AG04449 (cell line): ENCODE measurements at regions of chr1 and their contacts with region 1.

Region 1: DNA sequence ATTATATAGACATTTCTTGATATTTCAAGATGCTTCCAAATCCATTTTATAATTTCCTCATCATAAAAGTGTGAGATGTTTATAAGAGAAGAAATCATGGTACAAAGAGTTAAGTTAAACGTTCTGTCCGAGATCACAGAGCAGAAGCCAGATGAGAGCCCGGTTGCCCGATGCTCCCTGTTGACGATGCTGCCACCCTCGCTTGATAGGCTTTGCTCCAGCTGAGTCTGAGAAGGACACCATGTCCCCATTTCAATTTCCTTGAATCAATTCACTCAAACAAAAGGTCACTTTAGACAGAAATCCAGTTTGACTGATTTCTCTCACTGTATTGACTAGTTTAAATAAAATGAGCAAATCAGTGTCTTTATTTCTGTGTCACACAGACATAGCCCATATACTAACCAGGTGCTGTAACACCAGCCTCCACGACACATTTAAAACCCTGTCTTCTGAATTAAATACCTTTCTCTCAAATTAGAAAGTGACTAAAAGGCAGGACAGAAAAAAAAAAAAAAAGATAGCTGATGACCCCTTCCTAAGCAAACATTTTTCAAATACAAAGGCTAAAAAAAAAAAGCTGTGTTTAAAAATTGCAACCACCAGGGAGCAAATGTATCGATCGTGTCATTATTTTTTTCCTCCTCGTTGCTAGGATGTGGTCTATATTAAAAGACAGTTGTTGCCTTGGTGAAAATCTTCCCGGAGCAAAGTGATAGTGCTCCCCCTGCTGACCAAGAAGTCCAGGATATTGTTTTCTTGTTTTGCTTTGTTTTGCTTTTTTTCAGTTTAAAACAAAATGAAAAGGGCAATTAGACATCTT is 35.2 kb downstream of the DNASE2B start:
- DNase-seq: peak; percentile 16
- H3K4me3 ChIP-seq: no peak overlapping the region; the same call in 1 of the 2 replicates
- CTCF ChIP-seq: peak; percentile 62

Region 2: DNA sequence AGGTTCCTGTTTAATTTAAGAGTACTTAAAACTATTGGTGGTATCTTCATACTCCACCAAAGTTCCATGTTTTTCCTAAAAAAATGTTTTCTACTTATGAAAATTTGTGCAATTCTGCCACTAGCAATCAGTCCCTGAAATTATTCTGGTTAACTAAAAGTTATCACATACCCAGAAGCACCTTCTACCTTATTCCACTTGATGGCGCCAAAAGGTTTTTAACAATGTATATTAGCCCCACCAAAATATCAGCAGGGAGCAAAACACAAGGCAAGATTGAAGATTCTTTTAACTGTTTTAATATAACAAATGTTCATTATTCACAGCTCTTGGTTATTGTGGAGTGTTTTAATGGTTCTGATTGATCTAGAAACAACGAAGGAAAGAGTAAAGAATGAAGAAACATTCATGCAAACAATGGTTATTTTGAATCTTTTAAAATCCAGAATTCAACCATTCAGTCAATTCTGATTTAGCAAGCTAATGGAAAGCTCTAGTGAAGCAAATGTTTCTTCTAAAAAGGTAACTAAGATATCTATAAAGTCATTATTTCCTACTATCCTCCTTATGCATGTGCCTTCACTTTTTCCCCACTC is 501.7 kb before region 1 on chr1:
- CTCF ChIA-PET with region 1: interaction called, 82 read pairs
- POLR2A ChIA-PET with region 1: no interaction called
- DNase-seq: no peak
- H3K4me3 ChIP-seq: no peak overlapping the region
- CTCF ChIP-seq: peak; percentile 44

Region 3: GRCh38 chr1:84143796-84144565 is 289.5 kb before region 1 on chr1 and contains the start of gene PRKACB:
- CTCF ChIA-PET with region 1: interaction called, 255 read pairs
- POLR2A ChIA-PET with region 1: no interaction called
- DNase-seq: no peak
- H3K4me3 ChIP-seq: no peak within 1 kb of the TSS
- CTCF ChIP-seq: no peak

Region 4: GRCh38 chr1:84422909-84423308 is 10.6 kb before region 1 on chr1:
- CTCF ChIA-PET with region 1: interaction called, 33 read pairs
- POLR2A ChIA-PET with region 1: no interaction called
- DNase-seq: no peak
- H3K4me3 ChIP-seq: no peak overlapping the region
- CTCF ChIP-seq: no peak

Region 5: DNA sequence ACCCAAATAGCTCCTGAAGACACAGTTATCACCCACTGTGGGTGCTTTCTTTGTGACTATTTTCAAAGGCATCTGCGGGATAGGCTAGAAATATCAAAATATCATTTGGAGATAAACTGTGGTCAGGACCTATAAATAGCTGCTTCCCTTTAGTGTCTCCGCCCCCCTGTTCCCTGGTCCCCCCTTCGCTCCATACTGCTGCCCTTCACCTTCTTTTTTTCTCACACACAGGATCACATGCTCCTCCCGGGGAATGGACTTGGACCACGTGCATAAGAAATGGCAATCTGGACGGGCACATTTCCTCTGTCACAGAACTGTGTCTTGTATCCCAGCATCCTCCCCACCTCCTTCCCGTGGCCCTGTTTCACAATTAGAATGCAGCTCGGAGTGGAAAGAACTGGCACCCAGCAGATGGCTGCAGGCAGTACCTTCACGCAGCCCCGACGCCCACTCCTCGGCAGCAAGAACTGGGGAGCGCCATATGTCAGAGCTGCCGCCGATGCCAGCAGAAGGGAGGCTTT is 325.6 kb after region 1 on chr1:
- CTCF ChIA-PET with region 1: interaction called, 20 read pairs
- POLR2A ChIA-PET with region 1: no interaction called
- DNase-seq: no peak
- H3K4me3 ChIP-seq: no peak overlapping the region; the same call in 1 of the 2 replicates
- CTCF ChIP-seq: no peak